Naive thymus-derived CD4-positive, alpha-beta T cell (primary cell): ENCODE measurements at regions of chr12 and their contacts with region 1.

Region 1: DNA sequence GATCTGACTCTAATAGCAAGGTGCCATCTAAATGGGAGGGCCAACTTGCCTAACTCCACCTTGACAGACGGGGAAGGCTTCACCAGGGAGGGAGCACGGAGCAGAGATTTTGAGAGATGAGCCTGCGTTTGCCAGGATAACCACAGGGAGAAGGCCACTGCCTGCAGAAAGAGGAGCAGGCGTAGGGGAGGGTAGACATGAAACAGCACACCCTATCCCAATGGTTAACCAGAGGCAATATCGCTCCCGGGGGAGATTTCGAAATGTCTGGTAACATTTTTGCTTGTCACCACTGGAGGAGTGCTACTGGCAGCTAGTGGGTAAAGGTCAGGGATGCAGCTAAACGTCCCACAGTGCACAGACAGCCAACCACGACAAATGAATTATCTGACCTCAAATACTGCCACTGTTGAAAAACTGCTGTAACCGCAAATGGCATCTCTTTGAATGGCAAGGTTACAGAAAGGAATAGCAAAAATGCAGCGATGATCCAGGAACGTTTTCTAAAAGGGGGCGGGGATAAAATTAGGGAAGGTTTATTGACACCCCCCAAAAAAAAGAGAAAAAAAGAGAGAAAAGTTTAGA is 126.0 kb upstream of the ATF7IP start:
- DNase-seq: peak in 2 of 9 donors; percentile 12 to 40
- ATAC-seq: peak; percentile 69
- H3K4me3 ChIP-seq: peak overlapping the region; percentile 52
- H3K4me3 Mint-ChIP-seq: peak overlapping the region; percentile 75 to 90 (median 82)
- H3K27ac ChIP-seq: peak overlapping the region; percentile 1
- H3K27ac Mint-ChIP-seq: peak overlapping the region; percentile 37 to 93 (median 87)
- H3K4me1 ChIP-seq: peaks cover 0 to 6% of the 10 kb centered on the region in 2 donors
- H3K4me1 Mint-ChIP-seq: peaks cover 17 to 29% (median 22%) of the 10 kb centered on the region in 7 donors
- H3K27me3 ChIP-seq: no peaks in the 10 kb centered on the region
- H3K27me3 Mint-ChIP-seq: no peaks in the 10 kb centered on the region

Region 2: DNA sequence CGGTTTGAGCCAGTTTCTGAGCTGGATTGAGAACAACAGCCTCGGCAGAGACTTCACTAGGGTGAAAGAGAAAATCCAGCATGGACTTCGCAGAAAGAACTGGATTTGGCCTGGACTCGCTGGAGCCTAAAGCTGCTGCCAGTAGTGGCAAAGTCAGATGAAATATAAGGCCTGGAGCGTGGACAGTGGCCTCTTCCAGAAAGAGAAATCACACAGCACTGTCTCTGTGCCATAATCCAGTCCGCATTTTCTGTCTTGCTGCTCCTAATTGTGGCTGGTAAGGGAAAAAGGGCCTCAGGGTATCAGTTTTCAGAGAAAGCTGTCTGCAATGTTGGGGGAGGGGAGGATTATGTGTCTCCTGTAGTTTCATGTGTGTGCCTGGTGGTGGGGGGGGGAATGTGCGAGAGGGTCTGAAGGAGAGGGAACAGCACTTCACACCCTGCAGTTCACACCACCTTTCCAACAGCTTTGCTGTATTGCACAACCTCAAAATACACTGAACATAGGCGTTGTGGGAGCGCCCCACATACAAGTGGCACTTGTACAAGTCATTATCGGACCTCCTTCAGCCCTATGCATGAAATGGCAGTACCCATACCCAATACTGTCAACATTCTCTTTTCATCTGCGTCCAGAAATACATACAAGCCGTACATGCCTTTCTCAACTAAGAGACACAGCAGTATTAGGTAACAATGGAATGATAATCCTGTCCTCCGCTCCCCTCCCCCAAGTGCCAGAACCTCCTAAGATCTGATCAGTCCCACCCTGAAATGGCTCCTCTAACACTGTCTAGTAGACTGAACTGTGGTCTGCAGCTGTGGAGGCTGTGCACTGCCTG is 18.5 kb after region 1 on chr12:
- CTCF ChIA-PET with region 1: interaction called, 36 read pairs
- POLR2A ChIA-PET with region 1: interaction called, 26 read pairs
- intact Hi-C with region 1: loop called (anchors 1 kb)
- DNase-seq: peak; percentile 49 to 85 (median 79)
- ATAC-seq: peak; percentile 72
- H3K4me3 ChIP-seq: peak overlapping the region; percentile 31
- H3K4me3 Mint-ChIP-seq: peak overlapping the region; percentile 67 to 81 (median 77)
- H3K27ac ChIP-seq: peak overlapping the region; percentile 65
- H3K27ac Mint-ChIP-seq: peak overlapping the region; percentile 89 to 99 (median 98)
- H3K4me1 ChIP-seq: peaks cover 37 to 38% of the 10 kb centered on the region in 2 donors
- H3K4me1 Mint-ChIP-seq: peaks cover 39 to 66% (median 61%) of the 10 kb centered on the region in 7 donors
- H3K27me3 ChIP-seq: no peaks in the 10 kb centered on the region
- H3K27me3 Mint-ChIP-seq: no peaks in the 10 kb centered on the region

Region 3: GRCh38 chr12:14505626-14506596 is 266.5 kb after region 1 on chr12:
- CTCF ChIA-PET with region 1: interaction called, 4 read pairs
- POLR2A ChIA-PET with region 1: no interaction called
- intact Hi-C with region 1: loop called in 1 of 2 experiments (anchors 5 kb)
- DNase-seq: no peak
- ATAC-seq: no peak
- H3K4me3 ChIP-seq: no peak overlapping the region
- H3K4me3 Mint-ChIP-seq: no peak overlapping the region
- H3K27ac ChIP-seq: no peak overlapping the region
- H3K27ac Mint-ChIP-seq: peak overlapping the region in 3 of 9 donors; percentile 0 to 72 (median 28)
- H3K4me1 ChIP-seq: no peaks in the 10 kb centered on the region
- H3K4me1 Mint-ChIP-seq: peaks cover 0 to 7% (median 0%) of the 10 kb centered on the region in 7 donors
- H3K27me3 ChIP-seq: no peaks in the 10 kb centered on the region
- H3K27me3 Mint-ChIP-seq: no peaks in the 10 kb centered on the region

Region 4: GRCh38 chr12:14629832-14630710 is 390.6 kb after region 1 on chr12:
- CTCF ChIA-PET with region 1: interaction called, 8 read pairs
- POLR2A ChIA-PET with region 1: no interaction called
- intact Hi-C with region 1: loop called (anchors 1 kb)
- DNase-seq: peak; percentile 25 to 71 (median 55)
- ATAC-seq: peak; percentile 99
- H3K4me3 ChIP-seq: no peak overlapping the region
- H3K4me3 Mint-ChIP-seq: no peak overlapping the region
- H3K27ac ChIP-seq: no peak overlapping the region
- H3K27ac Mint-ChIP-seq: no peak overlapping the region
- H3K4me1 ChIP-seq: no peaks in the 10 kb centered on the region
- H3K4me1 Mint-ChIP-seq: no peaks in the 10 kb centered on the region
- H3K27me3 ChIP-seq: no peaks in the 10 kb centered on the region
- H3K27me3 Mint-ChIP-seq: peaks cover 0 to 35% (median 7%) of the 10 kb centered on the region in 5 donors

Region 5: GRCh38 chr12:14716848-14717444 is 477.5 kb after region 1 on chr12:
- CTCF ChIA-PET with region 1: interaction called, 12 read pairs
- POLR2A ChIA-PET with region 1: no interaction called
- intact Hi-C with region 1: loop called (anchors 1 kb)
- DNase-seq: peak; percentile 13 to 57 (median 45)
- ATAC-seq: peak; percentile 76
- H3K4me3 ChIP-seq: no peak overlapping the region
- H3K4me3 Mint-ChIP-seq: no peak overlapping the region
- H3K27ac ChIP-seq: no peak overlapping the region
- H3K27ac Mint-ChIP-seq: no peak overlapping the region
- H3K4me1 ChIP-seq: no peaks in the 10 kb centered on the region
- H3K4me1 Mint-ChIP-seq: peaks cover 0 to 6% (median 0%) of the 10 kb centered on the region in 7 donors
- H3K27me3 ChIP-seq: no peaks in the 10 kb centered on the region
- H3K27me3 Mint-ChIP-seq: peaks cover 0 to 23% (median 0%) of the 10 kb centered on the region in 5 donors

Region 6: GRCh38 chr12:15268927-15269552 is 1029.6 kb after region 1 on chr12:
- CTCF ChIA-PET with region 1: no interaction called
- POLR2A ChIA-PET with region 1: no interaction called
- intact Hi-C with region 1: loop called in 1 of 2 experiments (anchors 2 kb)
- DNase-seq: peak in 7 of 9 donors; percentile 28 to 65 (median 56)
- ATAC-seq: peak; percentile 79
- H3K4me3 ChIP-seq: no peak overlapping the region
- H3K4me3 Mint-ChIP-seq: no peak overlapping the region
- H3K27ac ChIP-seq: no peak overlapping the region
- H3K27ac Mint-ChIP-seq: no peak overlapping the region
- H3K4me1 ChIP-seq: no peaks in the 10 kb centered on the region
- H3K4me1 Mint-ChIP-seq: no peaks in the 10 kb centered on the region
- H3K27me3 ChIP-seq: no peaks in the 10 kb centered on the region
- H3K27me3 Mint-ChIP-seq: peaks cover 2 to 11% (median 5%) of the 10 kb centered on the region in 5 donors